Heart right ventricle (tissue), 16 donors: ENCODE measurements at regions of chr11 and their contacts with region 1.

Region 1: DNA sequence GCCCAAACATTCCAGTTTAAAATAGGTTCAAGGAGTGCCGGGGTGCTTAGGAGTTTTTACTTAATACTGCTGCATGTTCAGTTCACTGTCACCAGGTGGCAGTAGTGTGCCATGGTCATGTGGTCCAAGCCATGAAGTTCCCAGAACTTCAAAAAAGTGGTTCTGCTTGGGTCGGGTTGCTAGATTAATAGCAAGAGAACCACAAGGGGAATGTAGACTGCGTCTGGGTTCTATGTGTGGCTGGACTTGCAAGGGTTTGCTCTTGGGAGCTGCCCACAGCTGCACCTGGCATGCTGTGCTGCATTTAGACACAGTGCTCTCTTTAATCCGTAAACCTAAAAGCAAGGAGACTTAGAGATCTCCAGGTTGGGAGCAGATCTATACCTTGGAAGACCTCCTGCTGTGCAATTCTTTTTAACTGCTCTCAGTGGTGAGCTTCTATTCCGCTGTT is 6.5 kb upstream of the SPON1 start:
- DNase-seq: peak in 1 of 2 donors; percentile 65
- ATAC-seq: peak; percentile 34 to 76 (median 66)
- H3K4me3 ChIP-seq: no peak overlapping the region
- H3K27ac ChIP-seq: no peak overlapping the region
- H3K4me1 ChIP-seq: peaks cover 0 to 6% (median 0%) of the 10 kb centered on the region in 9 donors
- H3K27me3 ChIP-seq: peaks cover 0 to 93% (median 44%) of the 10 kb centered on the region in 7 donors
- CTCF ChIP-seq: peak; percentile 66 to 92 (median 85)

Region 2: DNA sequence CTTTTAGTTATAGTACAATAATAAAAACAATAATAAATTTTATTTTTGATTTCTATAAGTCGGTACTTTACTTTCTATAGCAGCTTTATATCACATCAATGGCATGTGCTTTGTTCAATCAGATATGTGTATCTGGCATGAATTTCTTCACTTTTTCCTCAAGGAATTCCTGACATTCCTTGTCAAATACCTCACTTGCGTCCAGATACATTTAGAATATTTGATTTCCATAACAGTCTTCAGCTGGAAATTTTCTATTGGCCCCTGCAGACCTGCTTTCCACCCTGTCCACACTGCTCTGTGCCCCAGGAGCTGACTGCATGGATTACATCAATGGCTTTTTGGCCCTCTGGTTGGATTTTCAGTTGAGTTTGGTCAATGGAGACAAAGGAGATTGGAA is 194.3 kb before region 1 on chr11:
- intact Hi-C with region 1: loop called in 1 of 10 experiments (anchors 10 kb)
- DNase-seq: no peak
- ATAC-seq: no peak
- H3K4me3 ChIP-seq: no peak overlapping the region
- H3K27ac ChIP-seq: no peak overlapping the region
- H3K4me1 ChIP-seq: peaks cover 0 to 10% (median 0%) of the 10 kb centered on the region in 9 donors
- H3K27me3 ChIP-seq: no peaks in the 10 kb centered on the region
- CTCF ChIP-seq: no peak

Region 3: DNA sequence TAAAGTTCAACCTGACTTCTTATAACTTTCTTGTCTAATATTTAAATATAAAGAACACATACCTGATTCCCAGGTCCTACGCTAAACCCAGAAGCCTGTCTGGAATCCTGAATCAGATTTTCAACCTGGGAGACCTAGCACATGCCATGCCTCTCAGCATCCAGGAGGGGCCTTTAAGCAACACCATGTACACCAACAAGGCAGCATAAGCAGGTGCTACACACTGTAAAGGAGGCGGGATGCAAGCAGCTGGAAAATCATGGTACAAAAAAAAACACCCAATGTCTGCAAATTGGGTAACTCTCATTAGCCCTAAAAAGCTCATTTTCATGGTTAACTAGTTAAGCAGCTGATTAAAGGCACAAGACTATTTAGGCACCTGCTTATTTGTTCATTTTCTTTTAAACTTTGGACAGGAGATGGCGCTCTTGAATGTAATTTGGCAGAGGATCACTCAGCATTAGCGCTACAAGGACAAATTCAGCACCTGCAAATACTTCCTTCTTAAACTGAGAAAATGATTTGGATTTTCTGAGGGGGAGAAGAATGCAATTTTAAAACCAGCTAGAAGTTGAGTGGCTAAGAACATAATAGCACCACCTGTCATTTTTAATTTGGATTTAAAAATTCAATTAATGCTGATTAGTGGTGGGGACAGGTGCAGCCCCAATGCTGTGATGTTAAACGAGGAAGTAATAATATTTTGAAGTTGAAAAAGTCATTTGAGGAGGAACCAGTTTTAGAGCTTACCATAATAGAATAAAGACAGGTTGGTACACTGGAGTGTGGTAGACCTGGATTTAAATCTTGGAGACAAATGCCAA is 183.6 kb before region 1 on chr11:
- intact Hi-C with region 1: loop called in 3 of 10 experiments (anchors 10 kb)
- DNase-seq: peak in 1 of 2 donors; percentile 7
- ATAC-seq: peak in 3 of 8 donors; percentile 46 to 62 (median 56)
- H3K4me3 ChIP-seq: no peak overlapping the region
- H3K27ac ChIP-seq: no peak overlapping the region
- H3K4me1 ChIP-seq: no peaks in the 10 kb centered on the region
- H3K27me3 ChIP-seq: peaks cover 0 to 46% (median 28%) of the 10 kb centered on the region in 7 donors
- CTCF ChIP-seq: peak; percentile 14 to 65 (median 53)

Region 4: GRCh38 chr11:13861411-13861810 is 94.6 kb before region 1 on chr11:
- intact Hi-C with region 1: no loop called
- DNase-seq: no peak
- ATAC-seq: no peak
- H3K4me3 ChIP-seq: no peak overlapping the region
- H3K27ac ChIP-seq: no peak overlapping the region
- H3K4me1 ChIP-seq: no peaks in the 10 kb centered on the region
- H3K27me3 ChIP-seq: peaks cover 0 to 6% (median 0%) of the 10 kb centered on the region in 7 donors
- CTCF ChIP-seq: no peak

Region 5: DNA sequence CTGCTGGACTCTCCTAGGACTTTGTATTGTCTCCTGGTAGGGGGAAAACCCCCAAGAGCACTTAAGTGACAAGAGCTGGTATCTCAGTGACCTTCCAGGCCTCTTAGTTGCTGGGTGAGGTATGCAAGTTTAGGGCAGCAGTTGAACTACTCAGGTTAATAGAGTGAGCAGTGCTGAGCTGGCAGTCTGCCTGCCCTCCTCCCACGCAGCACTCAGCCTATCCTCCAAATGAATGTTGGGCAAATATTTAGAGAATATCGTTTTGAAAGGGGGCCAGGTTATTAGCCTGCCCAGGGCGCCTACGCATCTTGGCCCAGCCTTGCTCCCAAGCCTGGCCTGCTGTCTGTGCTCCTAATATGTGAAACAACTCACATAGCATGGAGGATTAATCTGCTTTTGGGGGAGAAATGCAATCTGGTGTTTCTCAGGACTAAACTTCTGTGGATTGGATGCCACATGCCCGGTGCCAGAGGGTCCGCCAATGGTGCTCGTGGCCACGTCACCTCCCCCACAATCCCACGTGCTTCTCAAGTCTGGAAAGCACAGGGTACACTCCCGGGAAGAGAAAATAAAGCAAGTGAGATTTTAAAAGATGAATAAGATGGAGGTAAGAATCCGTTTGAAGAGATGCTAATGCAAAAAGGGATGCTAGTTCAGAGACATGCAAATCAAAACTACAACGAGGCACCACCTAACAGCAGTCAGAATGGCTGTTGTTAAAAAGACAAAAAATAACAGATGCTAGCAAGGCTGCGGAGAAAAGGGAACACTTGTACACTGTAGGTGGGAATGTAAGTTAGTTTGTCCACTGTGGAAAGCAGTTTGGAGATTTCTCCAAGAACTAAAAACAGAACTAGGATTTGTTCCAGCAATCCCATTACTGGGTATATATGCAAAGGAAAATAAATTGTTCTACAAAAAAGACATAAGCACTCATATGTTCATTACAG is 74.2 kb after region 1 on chr11:
- intact Hi-C with region 1: no loop called
- DNase-seq: peak; percentile 65 to 66
- ATAC-seq: peak; percentile 59 to 94 (median 83)
- H3K4me3 ChIP-seq: no peak overlapping the region
- H3K27ac ChIP-seq: peak overlapping the region in 1 of 10 donors; percentile 46
- H3K4me1 ChIP-seq: peaks cover 3 to 46% (median 15%) of the 10 kb centered on the region in 9 donors
- H3K27me3 ChIP-seq: peaks cover 0 to 54% (median 11%) of the 10 kb centered on the region in 7 donors
- CTCF ChIP-seq: no peak

Region 6: GRCh38 chr11:14249121-14249963 is 293.3 kb after region 1 on chr11:
- intact Hi-C with region 1: loop called (anchors 1 to 5 kb)
- DNase-seq: peak; percentile 46 to 51
- ATAC-seq: peak; percentile 17 to 69 (median 48)
- H3K4me3 ChIP-seq: no peak overlapping the region
- H3K27ac ChIP-seq: no peak overlapping the region
- H3K4me1 ChIP-seq: peaks cover 0 to 20% (median 5%) of the 10 kb centered on the region in 9 donors
- H3K27me3 ChIP-seq: peaks cover 0 to 59% (median 16%) of the 10 kb centered on the region in 7 donors
- CTCF ChIP-seq: peak; percentile 83 to 95 (median 91)